ENCODE measurements at regions of chr1 and their contacts with region 1.

Region 1: DNA sequence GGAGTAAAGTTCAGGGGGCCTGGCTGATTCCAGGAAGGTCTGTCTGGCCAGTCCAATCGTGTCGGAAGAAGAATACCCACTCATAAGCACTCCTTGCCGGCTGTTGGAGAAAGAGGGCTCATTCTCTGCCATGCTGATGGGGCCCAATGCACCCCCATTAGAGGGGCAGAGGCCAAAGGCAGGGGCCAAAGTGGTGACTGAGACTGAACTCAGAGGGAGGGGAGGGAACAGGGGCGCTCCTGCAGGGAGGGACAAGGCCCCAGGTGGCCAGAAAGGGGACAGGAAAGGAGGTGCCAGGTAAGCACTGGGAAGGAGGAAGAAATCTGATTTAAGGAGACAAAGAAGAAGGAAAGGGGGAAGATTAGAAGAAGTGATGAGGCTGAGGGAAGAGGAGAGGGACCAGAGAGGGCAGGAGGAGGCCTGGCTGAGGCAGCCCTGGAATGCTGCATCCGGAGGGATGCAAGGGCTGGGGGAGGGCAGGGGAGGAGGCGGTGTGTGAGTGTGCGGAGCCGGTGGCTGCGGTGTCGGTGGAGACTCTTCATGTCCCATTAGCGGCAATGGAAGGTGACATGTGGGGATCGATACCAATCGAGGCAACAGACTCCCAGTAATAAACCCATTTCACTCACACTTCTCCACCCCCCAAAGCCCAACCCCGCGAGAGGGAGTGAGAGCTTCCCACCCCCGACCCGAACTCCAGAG is 11.9 kb upstream of the ETV3L start:
- DNase-seq: no peak
- H3K4me3 ChIP-seq: no peak overlapping the region
- H3K27ac ChIP-seq: no peak overlapping the region
- H3K4me1 ChIP-seq: no peaks in the 10 kb centered on the region
- CTCF ChIP-seq: no peak

Region 2: GRCh38 chr1:156601122-156601830 is 510.3 kb before region 1 on chr1 and contains the start of gene GPATCH4:
- CTCF ChIA-PET with region 1: no interaction called
- POLR2A ChIA-PET with region 1: interaction called, 10 read pairs
- intact Hi-C with region 1: no loop called
- DNase-seq: peak; percentile 86
- H3K4me3 ChIP-seq: peak within 1 kb of the TSS; percentile 78
- H3K27ac ChIP-seq: peak within 1 kb of the TSS; percentile 69
- H3K4me1 ChIP-seq: peaks cover 26% of the 10 kb centered on the region
- CTCF ChIP-seq: no peak
- total RNA-seq, gene GPATCH4: 33.3 and 40.9 TPM in 2 replicates

Region 3: DNA sequence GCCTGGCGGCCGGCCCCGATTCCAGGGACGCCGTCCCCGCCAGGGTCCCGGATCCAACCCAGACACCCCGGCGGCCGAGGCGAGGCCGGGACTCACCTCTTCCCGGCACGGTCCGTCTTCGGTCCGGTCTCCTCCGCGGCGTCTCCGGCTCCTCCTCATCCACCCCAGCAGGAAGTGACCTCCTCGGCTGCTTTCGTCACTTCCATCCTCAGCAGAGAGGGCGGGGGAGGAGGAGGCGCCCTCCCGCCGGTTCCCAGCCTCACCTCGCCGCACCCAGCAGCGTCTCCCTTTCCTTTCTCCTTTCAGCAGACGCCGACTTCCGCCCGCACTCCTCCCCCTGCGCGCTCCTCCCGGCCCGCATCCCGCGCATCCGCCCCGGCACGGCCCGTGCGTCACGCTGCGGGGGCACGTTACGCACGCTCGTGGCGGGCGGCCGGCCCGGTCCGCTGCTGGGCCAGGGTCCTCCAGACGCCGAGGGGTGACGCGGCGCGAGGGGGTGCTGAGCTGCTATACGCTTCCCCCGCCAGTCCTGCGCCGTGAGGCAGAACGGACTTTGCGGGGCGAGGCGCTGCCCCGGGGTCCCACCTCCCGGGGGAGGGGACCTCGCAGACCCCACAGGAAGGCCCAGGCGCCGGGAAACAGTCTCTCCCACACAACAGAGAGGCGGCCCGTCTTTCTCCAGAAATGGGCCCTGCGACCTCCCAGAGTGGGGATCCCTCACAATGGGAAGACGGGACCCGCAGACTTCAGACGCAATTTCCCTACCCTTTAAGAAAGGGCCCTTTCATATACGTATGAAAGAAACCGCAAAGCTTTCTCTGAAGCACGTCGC is 26.9 kb after region 1 on chr1 and contains the start of gene ETV3:
- CTCF ChIA-PET with region 1: no interaction called
- POLR2A ChIA-PET with region 1: no interaction called
- intact Hi-C with region 1: no loop called
- DNase-seq: peak; percentile 87
- H3K4me3 ChIP-seq: peak within 1 kb of the TSS; percentile 92
- H3K27ac ChIP-seq: peak within 1 kb of the TSS; percentile 28
- H3K4me1 ChIP-seq: peaks cover 22% of the 10 kb centered on the region
- CTCF ChIP-seq: no peak
- total RNA-seq, gene ETV3: 11.1 and 12.0 TPM in 2 replicates

Region 4: DNA sequence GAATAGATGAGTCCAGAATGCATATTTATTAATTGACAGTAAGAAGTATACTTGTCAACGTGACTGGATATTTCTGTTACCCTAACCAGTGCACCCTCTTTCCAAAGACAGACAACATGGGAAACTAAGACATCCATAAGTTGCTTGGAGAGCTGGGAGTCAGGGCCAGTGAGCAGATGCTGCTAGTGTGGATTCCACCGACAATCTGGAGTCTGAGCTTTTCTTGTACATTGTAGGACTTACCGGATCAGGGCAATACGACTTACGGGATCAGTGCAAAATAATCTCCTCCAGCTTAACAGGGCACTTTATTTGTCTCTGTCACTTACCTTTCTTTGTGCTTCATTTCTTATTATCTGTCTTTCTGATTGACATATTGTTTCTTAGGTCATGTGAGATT is 510.9 kb after region 1 on chr1:
- CTCF ChIA-PET with region 1: no interaction called
- POLR2A ChIA-PET with region 1: no interaction called
- intact Hi-C with region 1: no loop called
- DNase-seq: no peak
- H3K4me3 ChIP-seq: no peak overlapping the region
- H3K27ac ChIP-seq: no peak overlapping the region
- H3K4me1 ChIP-seq: peaks cover 4% of the 10 kb centered on the region
- CTCF ChIP-seq: no peak

Measured in OCI-LY7 (cell line).